Activated T-helper 1 cell treated with anti-CD3 and anti-CD28 coated beads, Interleukin-12 subunit alpha, Interleukin-12 subunit beta, Interleukin-2, Interleukin-4 antibody, amounts not matched to agents 30 ng/mL and 10 ng/mL and 1 ng/mL, durations not matched to agents 14 hours and 24 hours and 36 hours (primary cell): ENCODE measurements at regions of chr9 and their contacts with region 1.

Region 1: DNA sequence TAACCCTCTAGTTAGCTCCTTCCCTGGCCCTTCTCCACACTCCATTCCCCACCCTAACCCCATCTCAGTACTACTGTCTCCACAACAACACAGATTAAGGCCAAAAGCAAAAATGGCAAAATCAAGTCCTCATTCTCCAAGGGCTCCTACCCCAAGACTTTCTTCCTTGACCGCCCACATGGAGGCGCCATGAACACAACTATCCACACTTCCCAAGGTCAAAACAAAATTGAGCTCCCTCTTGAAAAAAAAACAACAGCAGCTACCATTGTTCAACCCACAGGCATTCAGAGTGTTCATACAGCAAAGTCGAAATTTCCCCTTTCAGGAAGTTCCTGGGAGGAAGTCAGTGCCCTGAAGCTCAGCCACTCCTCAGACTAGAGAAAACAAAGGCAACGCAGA is 54.4 kb downstream of the GNAQ start:
- DNase-seq: peak; percentile 34
- H3K4me3 Mint-ChIP-seq: peak overlapping the region; percentile 40
- H3K27ac Mint-ChIP-seq: peak overlapping the region; percentile 81
- H3K4me1 Mint-ChIP-seq: peaks cover 51% of the 10 kb centered on the region
- H3K27me3 Mint-ChIP-seq: no peaks in the 10 kb centered on the region

Region 2: DNA sequence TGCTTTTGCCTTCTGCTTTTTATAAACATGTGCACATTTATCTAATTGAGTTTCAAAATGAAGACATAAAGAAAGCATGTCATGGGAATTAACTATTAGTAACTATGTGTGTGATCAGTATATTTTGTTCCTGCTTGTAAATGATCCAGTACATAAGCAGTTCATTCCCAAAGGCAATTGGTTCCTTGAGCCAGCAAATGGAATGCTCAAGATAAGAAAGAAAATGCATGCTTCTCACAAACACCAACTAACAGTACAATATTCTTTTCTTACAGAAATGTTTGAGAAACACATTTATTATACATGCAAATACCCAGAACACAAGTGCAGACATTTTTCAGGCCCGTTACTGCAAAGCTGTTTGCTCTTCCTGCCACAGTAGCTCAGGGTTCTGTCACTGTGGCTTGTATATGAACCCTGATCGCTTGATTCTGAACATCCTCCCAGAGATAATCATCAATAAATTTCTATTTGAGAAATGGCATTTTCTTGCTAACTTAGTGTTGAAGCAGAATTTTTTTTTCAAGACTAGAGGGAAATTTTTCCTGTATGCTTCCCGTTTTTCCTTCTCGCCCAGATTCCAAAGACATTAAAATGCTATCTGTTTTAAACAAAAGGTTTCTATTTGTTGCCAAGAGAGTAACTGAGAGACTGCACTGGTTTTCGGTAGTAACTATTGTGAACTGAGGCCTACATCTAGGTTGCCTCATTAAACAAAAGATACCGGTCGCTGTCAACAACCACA is 52.5 kb after region 1 on chr9:
- intact Hi-C with region 1: loop called (anchors 1 kb)
- DNase-seq: no peak
- H3K4me3 Mint-ChIP-seq: peak overlapping the region; percentile 97
- H3K27ac Mint-ChIP-seq: peak overlapping the region; percentile 97
- H3K4me1 Mint-ChIP-seq: peaks cover 55% of the 10 kb centered on the region
- H3K27me3 Mint-ChIP-seq: no peaks in the 10 kb centered on the region

Region 3: GRCh38 chr9:78213712-78214111 is 236.5 kb after region 1 on chr9:
- intact Hi-C with region 1: loop called (anchors 5 kb)
- DNase-seq: no peak
- H3K4me3 Mint-ChIP-seq: no peak overlapping the region
- H3K27ac Mint-ChIP-seq: no peak overlapping the region
- H3K4me1 Mint-ChIP-seq: peaks cover 39% of the 10 kb centered on the region
- H3K27me3 Mint-ChIP-seq: peaks cover 2% of the 10 kb centered on the region

Region 4: GRCh38 chr9:78296893-78297671 is 319.9 kb after region 1 on chr9 and contains the start of gene PSAT1:
- intact Hi-C with region 1: loop called (anchors 5 kb)
- DNase-seq: peak; percentile 92
- H3K4me3 Mint-ChIP-seq: peak within 1 kb of the TSS; percentile 91
- H3K27ac Mint-ChIP-seq: peak within 1 kb of the TSS; percentile 91
- H3K4me1 Mint-ChIP-seq: peaks cover 61% of the 10 kb centered on the region
- H3K27me3 Mint-ChIP-seq: no peaks in the 10 kb centered on the region
- total RNA-seq, gene PSAT1: 85.7 and 91.8 TPM in 2 replicates